CD4-positive, alpha-beta T cell (primary cell): ENCODE measurements at regions of chr17 and their contacts with region 1.

Region 1: DNA sequence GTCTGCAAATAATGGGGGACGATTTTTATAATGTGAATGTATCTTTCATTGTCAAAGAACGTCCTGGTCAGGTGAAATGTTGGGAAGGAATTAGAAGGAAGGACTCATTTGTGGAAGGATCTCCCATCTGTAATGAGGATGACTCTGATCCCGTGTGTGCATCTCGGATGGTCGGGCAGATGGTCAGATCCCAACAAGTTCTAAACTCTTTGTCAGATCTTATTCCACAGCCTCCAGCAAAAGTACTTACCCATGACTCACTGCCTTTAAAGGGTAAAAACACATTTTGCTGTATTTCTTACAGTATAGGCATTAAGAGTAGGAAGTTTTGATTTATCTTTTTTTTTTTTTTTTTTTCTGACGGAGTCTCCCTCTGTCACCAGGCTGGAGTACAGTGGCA is 534 bp upstream of the KRTAP4-8 start:
- DNase-seq: no peak
- ATAC-seq: no peak
- H3K4me3 ChIP-seq: no peak overlapping the region
- H3K4me3 Mint-ChIP-seq: no peak overlapping the region
- H3K27ac ChIP-seq: no peak overlapping the region
- H3K27ac Mint-ChIP-seq: no peak overlapping the region
- H3K4me1 ChIP-seq: peaks cover 3% of the 10 kb centered on the region
- H3K4me1 Mint-ChIP-seq: peaks cover 17% of the 10 kb centered on the region
- H3K27me3 ChIP-seq: peaks cover 0 to 2% of the 10 kb centered on the region in 2 experiments
- H3K27me3 Mint-ChIP-seq: peaks cover 10% of the 10 kb centered on the region
- CTCF ChIP-seq: no peak

Region 2: DNA sequence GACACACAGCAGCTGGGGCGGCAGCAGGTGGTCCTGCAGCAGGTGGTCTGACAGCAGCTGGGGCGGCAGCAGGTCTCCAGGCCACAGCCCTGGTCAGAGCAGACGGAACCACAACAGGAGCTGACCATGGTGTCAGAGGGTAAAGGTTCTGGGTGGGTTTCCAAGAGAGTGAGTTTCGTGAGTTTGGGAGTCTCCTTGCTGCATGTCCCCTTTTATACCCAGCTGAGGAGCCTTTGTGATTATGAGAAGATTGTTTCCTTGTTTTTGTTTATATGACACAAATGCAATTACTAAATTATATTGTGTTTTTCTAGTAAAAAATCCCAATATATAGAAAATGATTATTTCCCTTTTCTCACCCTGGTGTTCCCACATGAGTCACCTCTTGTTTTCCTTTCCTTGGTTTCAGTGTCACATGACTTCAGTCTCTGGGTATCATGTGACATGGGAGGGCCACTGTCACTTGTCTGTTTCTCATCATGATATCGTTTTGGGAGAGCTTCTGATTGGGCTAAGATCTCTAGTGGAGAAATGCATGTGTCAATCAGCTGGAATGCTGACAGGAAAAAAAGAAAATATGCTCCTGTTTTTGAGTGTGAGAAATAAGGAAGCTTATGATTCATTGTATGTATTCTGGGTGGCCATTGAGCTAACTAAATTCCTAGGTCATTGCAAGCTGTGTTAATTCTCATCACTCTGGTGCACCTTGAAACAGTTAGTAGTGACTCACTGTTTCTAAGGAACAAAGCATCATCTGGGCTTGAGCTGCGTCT is 42.1 kb after region 1 on chr17 and contains the start of gene KRTAP4-6:
- CTCF ChIA-PET with region 1: no interaction called
- POLR2A ChIA-PET with region 1: no interaction called
- intact Hi-C with region 1: loop called in 1 of 2 experiments (anchors 5 kb)
- DNase-seq: no peak
- ATAC-seq: no peak
- H3K4me3 ChIP-seq: no peak within 1 kb of the TSS
- H3K4me3 Mint-ChIP-seq: no peak within 1 kb of the TSS
- H3K27ac ChIP-seq: no peak within 1 kb of the TSS
- H3K27ac Mint-ChIP-seq: no peak within 1 kb of the TSS
- H3K4me1 ChIP-seq: no peaks in the 10 kb centered on the region
- H3K4me1 Mint-ChIP-seq: no peaks in the 10 kb centered on the region
- H3K27me3 ChIP-seq: no peaks in the 10 kb centered on the region
- H3K27me3 Mint-ChIP-seq: no peaks in the 10 kb centered on the region
- CTCF ChIP-seq: no peak
- total RNA-seq, gene KRTAP4-6: not detected